ENCODE measurements at regions of chr6 and their contacts with region 1.

Region 1: DNA sequence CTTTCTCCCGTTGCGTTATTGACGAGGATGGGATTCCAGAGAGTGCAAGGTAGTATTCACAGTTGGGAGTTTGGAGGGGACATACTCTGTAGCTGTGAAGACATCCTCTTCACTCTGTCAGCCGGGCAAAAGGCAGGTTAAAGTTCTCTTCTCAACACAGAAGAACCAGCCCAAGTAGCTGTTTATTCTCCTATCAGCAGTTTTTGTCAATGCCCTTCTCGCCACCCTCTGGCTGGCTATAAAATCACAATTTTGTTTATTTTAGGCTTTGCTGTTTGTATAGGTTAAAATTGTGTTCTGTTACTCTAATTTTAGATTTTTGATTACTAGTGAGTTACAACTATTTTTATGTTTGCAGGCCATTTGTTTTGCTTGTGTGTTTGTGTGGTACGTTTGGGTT is 37.9 kb upstream of the MAS1 start:
- DNase-seq: peak; percentile 40 to 60 (median 58)
- H3K4me3 ChIP-seq: no peak overlapping the region
- H3K27ac ChIP-seq: no peak overlapping the region
- H3K4me1 ChIP-seq: peaks cover 0 to 4% (median 1%) of the 10 kb centered on the region in 4 experiments
- H3K27me3 ChIP-seq: no peaks in the 10 kb centered on the region

Region 2: GRCh38 chr6:159595173-159595572 is 257.7 kb before region 1 on chr6:
- CTCF ChIA-PET with region 1: no interaction called
- POLR2A ChIA-PET with region 1: no interaction called
- DNase-seq: no peak
- H3K4me3 ChIP-seq: no peak overlapping the region
- H3K27ac ChIP-seq: no peak overlapping the region
- H3K4me1 ChIP-seq: no peaks in the 10 kb centered on the region
- H3K27me3 ChIP-seq: no peaks in the 10 kb centered on the region

Region 3: DNA sequence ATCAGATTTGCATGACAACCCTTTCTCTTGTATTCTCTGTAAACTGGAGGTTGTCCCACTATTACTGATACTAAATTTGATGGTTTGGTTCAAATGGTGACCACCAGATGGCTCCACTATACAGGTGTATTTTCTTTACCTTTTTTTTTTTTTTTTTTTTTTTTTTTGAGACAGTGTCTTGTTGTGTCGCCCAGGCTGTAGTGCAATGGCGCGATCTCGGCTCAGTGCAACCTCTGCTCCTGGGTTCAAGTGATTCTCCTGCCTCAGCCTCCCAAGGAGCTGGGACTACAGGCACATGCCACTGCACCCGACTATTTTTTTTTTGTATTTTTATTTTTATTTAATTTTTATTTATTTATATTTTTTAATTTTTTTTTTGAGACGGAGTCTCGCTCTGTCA is 132.2 kb before region 1 on chr6:
- CTCF ChIA-PET with region 1: interaction called, 16 read pairs
- POLR2A ChIA-PET with region 1: no interaction called
- DNase-seq: peak; percentile 55 to 65 (median 61)
- H3K4me3 ChIP-seq: no peak overlapping the region
- H3K27ac ChIP-seq: no peak overlapping the region
- H3K4me1 ChIP-seq: peaks cover 4 to 21% (median 9%) of the 10 kb centered on the region in 4 experiments
- H3K27me3 ChIP-seq: no peaks in the 10 kb centered on the region

Region 4: DNA sequence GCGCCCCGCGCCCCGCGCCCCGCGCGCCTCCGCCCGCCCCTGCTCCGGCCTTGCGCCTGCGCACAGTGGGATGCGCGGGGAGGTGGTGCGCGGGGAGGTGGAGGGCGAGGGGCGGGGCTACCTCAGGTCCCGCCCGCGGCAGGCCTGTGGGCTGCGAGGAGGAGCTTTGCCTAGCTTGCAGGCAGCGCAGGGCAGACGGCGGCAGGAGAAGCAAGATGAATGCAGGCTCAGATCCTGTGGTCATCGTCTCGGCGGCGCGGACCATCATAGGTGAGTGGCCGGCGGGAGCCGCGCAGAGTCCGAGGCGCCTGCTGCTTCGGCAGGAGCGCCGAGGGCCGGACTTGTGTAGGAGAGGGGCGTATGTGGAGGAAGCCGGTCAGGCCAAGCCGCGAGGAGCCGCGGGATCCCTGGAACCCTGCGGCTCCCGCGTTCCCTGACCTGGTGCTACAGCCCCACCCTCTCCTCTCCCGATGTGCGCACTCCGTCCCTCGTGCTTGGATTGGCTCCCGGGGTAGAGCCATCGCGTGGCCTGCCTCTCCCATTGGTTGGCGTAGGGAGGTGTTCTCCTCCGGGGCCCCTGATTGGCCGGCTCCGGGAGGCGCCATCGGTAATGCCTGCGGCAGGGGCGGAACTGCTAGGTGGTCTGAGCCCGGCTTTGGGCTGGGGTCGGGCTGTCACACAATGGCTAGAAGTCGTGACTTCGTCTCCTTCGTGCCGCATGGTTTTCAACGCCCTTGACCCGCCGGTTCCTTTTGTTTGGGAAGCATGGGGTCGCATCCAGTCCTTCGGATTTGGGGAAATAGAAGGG is 90.8 kb before region 1 on chr6 and contains the start of gene ACAT2:
- CTCF ChIA-PET with region 1: interaction called, 10 read pairs
- POLR2A ChIA-PET with region 1: no interaction called
- DNase-seq: peak; percentile 93 to 95 (median 95)
- H3K4me3 ChIP-seq: peak within 1 kb of the TSS; percentile 83 to 92 (median 89)
- H3K27ac ChIP-seq: peak within 1 kb of the TSS; percentile 84 to 97
- H3K4me1 ChIP-seq: peaks cover 11 to 34% (median 23%) of the 10 kb centered on the region in 4 experiments
- H3K27me3 ChIP-seq: no peaks in the 10 kb centered on the region

Region 5: DNA sequence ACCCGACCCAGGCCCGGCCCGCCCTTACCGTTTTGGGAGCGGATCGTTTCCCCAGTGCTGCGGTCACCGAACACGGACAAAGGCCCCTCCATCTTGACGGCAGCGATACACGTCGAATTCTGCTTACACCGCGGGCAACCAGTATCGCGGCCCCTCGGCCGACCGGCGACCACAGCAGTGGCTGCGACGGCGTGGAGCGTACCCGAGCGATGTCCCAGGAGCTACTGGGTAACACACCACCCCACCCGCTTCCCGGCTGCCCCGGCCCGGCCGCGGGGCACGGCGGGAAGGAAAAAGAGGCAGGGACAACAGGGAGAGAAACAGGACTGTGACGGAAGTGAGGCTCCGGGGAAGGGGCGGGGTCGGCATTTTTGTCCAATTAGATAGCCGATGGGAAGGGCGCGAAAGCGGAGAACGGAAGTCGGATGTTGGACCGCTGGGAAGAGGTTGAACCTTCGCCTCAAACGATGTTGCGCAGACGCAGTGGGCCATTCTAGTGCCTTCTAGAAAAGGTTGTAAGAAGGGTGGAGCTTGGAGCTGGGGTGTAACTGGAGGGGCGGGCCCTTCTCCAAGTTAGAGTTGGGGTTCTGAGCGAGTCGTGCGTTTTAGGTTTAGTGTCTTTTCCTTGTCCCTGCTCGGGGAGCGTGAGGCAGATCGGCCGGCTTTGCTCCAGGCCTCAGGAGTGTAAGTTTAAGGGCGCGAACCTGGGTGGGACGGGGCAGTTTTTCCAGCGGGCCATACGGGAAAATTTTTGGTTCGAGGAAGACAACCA is 63.3 kb before region 1 on chr6 and contains the start of gene TCP1:
- CTCF ChIA-PET with region 1: interaction called, 43 read pairs
- POLR2A ChIA-PET with region 1: interaction called, 6 read pairs
- DNase-seq: peak; percentile 99 to 100 (median 100)
- H3K4me3 ChIP-seq: peak within 1 kb of the TSS; percentile 66 to 97 (median 94)
- H3K27ac ChIP-seq: peak within 1 kb of the TSS; percentile 79 to 91
- H3K4me1 ChIP-seq: peaks cover 18 to 44% (median 29%) of the 10 kb centered on the region in 4 experiments
- H3K27me3 ChIP-seq: no peaks in the 10 kb centered on the region

Region 6: DNA sequence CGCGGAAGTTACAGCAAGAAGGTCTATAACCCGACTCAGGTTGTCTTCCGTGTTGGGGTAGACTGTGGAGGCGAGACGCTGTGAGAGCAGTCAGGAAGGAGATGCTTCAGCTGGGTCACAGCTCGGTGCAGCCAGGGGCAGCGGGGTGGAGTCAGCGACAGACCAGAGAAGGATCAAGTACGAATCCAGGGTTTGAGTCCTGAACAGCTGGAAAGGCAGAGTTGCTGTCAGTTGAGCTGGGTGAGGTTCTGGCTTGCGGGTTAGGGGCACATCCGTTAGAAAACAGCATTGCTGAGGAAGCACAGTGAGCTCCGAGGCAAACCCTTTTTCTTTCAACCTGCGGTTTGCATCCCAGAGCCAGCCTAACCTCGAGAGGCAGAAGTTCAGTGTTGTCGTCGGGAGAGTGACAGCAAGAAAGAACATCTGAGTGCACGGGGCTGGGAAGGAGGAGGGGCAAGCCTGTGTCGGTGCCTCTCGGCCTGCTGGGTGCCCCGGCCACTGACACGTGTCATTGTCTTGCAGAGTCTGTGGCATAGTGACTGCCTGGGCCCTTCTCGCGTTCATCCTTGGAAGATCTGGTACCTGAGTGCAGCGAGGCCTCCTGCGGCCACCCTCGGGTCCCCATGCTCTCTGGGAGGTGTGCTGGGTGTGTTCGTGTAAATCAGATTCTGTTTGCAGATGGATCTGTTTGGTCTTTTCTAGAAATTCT is 32.8 kb before region 1 on chr6:
- CTCF ChIA-PET with region 1: interaction called, 18 read pairs
- POLR2A ChIA-PET with region 1: no interaction called
- DNase-seq: peak; percentile 38 to 87 (median 82)
- H3K4me3 ChIP-seq: peak overlapping the region in 6 of 7 experiments; percentile 8 to 66 (median 18)
- H3K27ac ChIP-seq: peak overlapping the region in 1 of 2 experiments; percentile 45
- H3K4me1 ChIP-seq: peaks cover 8 to 53% (median 45%) of the 10 kb centered on the region in 4 experiments
- H3K27me3 ChIP-seq: no peaks in the 10 kb centered on the region

Region 7: GRCh38 chr6:159829526-159829925 is 23.4 kb before region 1 on chr6:
- CTCF ChIA-PET with region 1: interaction called, 28 read pairs
- POLR2A ChIA-PET with region 1: no interaction called
- DNase-seq: peak in 2 of 3 donors; percentile 40 to 43
- H3K4me3 ChIP-seq: peak overlapping the region in 3 of 7 experiments; percentile 6 to 55 (median 46)
- H3K27ac ChIP-seq: no peak overlapping the region
- H3K4me1 ChIP-seq: peaks cover 24 to 66% (median 51%) of the 10 kb centered on the region in 4 experiments
- H3K27me3 ChIP-seq: no peaks in the 10 kb centered on the region

Region 8: GRCh38 chr6:159953091-159953601 is 100.3 kb after region 1 on chr6:
- CTCF ChIA-PET with region 1: no interaction called
- POLR2A ChIA-PET with region 1: no interaction called
- DNase-seq: peak in 2 of 3 donors; percentile 21 to 23
- H3K4me3 ChIP-seq: no peak overlapping the region
- H3K27ac ChIP-seq: no peak overlapping the region
- H3K4me1 ChIP-seq: peaks cover 0 to 4% (median 0%) of the 10 kb centered on the region in 4 experiments
- H3K27me3 ChIP-seq: peaks cover 0 to 56% (median 20%) of the 10 kb centered on the region in 5 experiments